GM10248 (cell line): ENCODE measurements at regions of chr6 and their contacts with region 1.

Region 1: DNA sequence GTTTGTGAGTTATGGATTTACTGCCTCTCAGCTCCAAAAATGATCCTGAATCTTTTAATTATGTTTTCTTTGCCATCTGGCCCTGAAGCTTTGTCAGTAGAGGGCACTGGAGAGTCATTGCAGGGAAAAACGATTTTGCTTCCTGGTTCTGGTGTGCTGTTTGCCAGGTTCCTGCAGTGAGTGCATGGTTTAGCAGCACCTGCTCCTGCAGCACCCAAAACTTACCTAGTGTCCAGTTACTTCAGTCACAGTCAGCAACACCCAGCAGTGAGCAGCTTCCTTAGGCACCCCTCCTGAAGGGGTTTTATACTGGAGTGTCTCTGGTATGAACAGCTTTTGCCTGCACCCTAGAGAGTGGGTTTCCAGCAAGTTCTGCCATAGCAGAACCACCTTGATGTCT is 6.0 kb upstream of the TRIM26 start:
- DNase-seq: peak; percentile 71
- CTCF ChIP-seq: peak; percentile 86

Region 2: DNA sequence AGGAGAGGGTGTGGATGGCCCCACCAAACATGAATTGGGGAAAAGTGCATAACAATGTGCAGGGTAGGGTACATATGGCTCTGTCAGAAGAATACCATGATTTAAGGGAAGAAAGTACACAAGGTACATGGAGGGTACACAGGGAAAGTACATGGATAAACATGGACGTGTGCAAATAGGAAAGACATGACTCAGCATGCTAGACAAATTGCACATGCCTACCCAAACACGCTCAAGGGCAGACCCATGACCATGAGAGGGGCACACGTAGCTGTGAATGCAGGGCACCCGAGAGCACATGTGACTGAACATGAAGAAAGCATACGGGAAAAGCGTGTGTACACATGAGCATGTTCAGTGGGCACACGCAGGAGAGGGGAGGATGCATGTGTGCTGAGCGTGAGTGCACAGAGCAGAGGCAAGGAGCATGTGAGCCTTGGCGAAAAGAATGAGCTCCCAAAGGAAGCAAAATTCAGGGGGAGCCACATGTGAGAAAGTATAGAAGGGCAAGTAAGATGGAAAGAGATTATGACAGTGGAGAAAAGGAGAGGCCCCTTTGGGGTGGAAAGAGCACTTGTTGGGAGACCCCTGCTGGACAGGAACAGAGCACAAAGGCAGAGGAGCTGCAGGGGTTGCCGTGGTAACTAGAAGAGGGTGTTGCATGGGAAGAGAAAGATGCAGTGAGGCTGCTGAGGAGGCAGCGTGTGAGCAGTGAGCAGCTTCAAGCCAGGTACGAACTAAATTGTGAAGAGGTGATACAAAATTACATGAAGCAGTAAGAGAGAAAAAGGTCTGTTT is 616.5 kb before region 1 on chr6:
- CTCF ChIA-PET with region 1: no interaction called
- POLR2A ChIA-PET with region 1: no interaction called
- DNase-seq: peak; percentile 39
- CTCF ChIP-seq: no peak

Region 3: GRCh38 chr6:29827579-29828470 is 391.4 kb before region 1 on chr6 and contains the start of gene HLA-G:
- CTCF ChIA-PET with region 1: no interaction called
- POLR2A ChIA-PET with region 1: no interaction called
- DNase-seq: no peak
- CTCF ChIP-seq: no peak

Region 4: GRCh38 chr6:30206799-30207618 is 12.2 kb before region 1 on chr6:
- CTCF ChIA-PET with region 1: interaction called, 30 read pairs
- POLR2A ChIA-PET with region 1: no interaction called
- DNase-seq: no peak
- CTCF ChIP-seq: no peak

Region 5: GRCh38 chr6:30238174-30238795 is 19.0 kb after region 1 on chr6:
- CTCF ChIA-PET with region 1: interaction called, 25 read pairs
- POLR2A ChIA-PET with region 1: no interaction called
- DNase-seq: peak; percentile 49
- CTCF ChIP-seq: peak; percentile 67

Region 6: GRCh38 chr6:30259140-30260035 is 40.1 kb after region 1 on chr6:
- CTCF ChIA-PET with region 1: interaction called, 11 read pairs
- POLR2A ChIA-PET with region 1: no interaction called
- DNase-seq: peak; percentile 91
- CTCF ChIP-seq: peak; percentile 46

Region 7: DNA sequence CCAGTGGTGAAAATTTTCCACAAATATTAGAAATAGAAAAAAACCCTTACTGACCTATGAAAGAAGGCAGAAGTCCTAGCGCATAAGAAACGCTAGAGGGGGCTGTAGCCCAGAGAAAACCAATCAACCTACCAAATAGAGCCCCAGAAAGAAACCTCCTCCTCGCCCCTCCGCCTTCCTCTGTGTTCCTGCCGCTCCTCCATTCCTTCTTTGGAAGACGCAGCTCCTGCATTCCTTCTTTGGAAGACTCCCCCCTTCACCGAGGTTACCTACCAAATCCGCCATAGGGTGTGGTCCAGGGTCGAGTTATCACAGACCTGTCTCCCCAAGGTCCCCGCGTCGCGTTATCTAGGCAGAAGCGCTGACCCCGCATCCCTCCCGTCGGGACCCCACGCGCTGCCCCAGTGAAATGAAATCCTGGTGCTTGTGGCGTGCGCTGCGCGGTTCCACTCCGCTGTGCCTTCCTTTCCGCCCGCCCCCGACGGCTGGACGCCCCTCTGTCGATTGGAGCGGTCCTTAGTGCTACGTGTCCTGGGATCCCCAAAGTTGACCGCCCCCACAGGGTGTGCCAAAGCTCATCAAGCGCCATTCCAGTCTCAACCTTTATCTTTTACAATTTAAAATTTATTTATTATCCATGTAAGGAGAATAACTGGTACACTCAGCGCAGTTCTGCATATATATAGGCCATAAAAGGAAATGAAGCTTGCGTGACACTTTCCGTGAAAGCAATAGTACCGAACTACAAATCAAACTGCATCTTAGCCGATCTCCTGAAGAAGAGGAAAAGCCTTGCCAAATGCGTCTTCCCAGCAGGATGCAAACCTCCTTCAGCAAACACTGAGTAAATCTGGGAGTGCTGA is 138.7 kb after region 1 on chr6:
- CTCF ChIA-PET with region 1: interaction called, 11 read pairs
- POLR2A ChIA-PET with region 1: no interaction called
- DNase-seq: peak; percentile 73
- CTCF ChIP-seq: peak; percentile 64

Region 8: DNA sequence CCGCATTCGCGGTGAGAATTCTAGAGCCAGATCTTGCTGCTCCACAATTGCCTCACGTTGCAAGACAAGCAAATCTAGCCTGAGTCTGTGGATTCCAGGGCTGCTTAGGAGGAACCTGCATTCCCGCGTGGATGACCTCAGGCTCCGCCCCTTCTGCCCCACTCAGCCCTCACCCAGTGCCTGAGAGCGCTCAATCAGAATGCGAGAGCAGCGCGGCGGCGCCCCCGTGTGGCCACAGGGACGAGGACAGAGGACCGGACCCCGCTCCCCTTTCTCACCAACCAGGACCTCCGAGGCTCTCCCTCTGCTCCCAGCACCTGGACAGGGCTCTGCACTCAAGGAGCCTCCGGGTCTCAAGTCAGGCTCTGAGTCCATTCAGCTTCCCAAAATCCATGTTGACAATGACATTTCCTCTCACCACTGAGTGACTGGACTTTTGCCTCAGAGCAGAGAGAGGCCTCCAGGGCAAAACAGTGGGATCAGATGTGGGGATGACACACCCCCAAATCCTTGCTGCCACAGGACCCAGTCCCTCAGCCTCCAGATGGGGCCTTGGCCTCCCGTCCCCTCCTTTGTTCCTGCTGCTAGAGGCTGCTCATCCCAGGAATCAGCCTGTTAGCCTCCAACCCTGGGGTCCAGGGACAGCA is 177.7 kb after region 1 on chr6:
- CTCF ChIA-PET with region 1: interaction called, 10 read pairs
- POLR2A ChIA-PET with region 1: no interaction called
- DNase-seq: peak; percentile 90
- CTCF ChIP-seq: peak; percentile 90